Activated CD4-positive, alpha-beta T cell treated with anti-CD3 and anti-CD28 coated beads, Interleukin-2, amount 10 ng/mL, durations not matched to agents 24 days and 14 days (primary cell): ENCODE measurements at regions of chr2 and their contacts with region 1.

Region 1: GRCh38 chr2:9782197-9782719 is 61.0 kb upstream of the TAF1B start:
- DNase-seq: peak; percentile 94
- H3K4me3 Mint-ChIP-seq: peak overlapping the region; percentile 46
- H3K27ac Mint-ChIP-seq: peak overlapping the region; percentile 98
- H3K4me1 Mint-ChIP-seq: peaks cover 52% of the 10 kb centered on the region
- H3K27me3 Mint-ChIP-seq: no peaks in the 10 kb centered on the region

Region 2: DNA sequence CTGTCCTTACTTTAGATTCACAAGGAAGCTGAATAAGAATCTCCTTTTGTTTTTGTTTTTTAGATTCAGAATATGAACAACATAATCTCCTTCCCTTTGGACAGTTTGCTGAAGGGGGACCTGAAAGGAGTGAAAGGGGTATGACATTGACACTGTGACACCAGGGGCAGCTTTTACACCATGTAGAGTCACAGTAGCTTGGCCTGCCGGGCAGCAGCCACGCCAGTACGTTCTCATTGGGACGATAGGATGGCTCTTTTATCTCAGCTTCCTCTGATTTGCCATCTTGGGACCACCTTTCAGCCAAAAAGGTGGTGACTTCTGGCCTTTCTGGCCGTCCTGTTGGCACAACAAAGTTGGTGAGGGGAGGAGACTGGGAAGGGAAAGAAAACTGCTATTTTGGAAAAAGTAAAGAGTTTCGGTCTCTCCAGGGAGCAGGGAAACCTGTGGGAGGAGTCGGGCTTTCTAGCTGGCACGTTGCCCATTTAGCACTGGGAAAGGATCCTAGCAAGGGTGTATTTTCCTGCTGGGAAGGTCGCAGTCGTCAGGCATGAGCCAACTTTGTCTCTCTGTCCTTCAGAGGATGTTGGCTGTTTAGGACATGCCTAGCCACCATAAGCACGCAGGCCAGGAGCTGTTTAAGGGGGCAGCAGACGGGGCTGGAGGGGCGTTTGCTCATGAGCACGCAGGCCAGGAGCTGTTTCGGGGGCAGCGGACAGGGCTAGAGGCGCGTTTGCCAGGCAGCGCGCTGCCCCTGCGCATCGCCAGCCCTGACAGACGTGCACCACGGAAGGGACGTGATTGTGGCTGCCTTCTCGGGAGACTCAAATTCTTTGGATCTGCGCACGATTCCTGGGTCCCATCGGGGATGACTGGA is 463.6 kb before region 1 on chr2:
- intact Hi-C with region 1: no loop called
- DNase-seq: no peak
- H3K4me3 Mint-ChIP-seq: no peak overlapping the region
- H3K27ac Mint-ChIP-seq: no peak overlapping the region
- H3K4me1 Mint-ChIP-seq: no peaks in the 10 kb centered on the region
- H3K27me3 Mint-ChIP-seq: peaks cover 12% of the 10 kb centered on the region

Region 3: GRCh38 chr2:9594366-9595054 is 187.7 kb before region 1 on chr2:
- intact Hi-C with region 1: loop called (anchors 1 kb)
- DNase-seq: no peak
- H3K4me3 Mint-ChIP-seq: peak overlapping the region; percentile 22
- H3K27ac Mint-ChIP-seq: peak overlapping the region; percentile 81
- H3K4me1 Mint-ChIP-seq: peaks cover 52% of the 10 kb centered on the region
- H3K27me3 Mint-ChIP-seq: no peaks in the 10 kb centered on the region

Region 4: GRCh38 chr2:9763356-9764152 is 18.7 kb before region 1 on chr2:
- intact Hi-C with region 1: loop called (anchors 2 kb)
- DNase-seq: no peak
- H3K4me3 Mint-ChIP-seq: no peak overlapping the region
- H3K27ac Mint-ChIP-seq: no peak overlapping the region
- H3K4me1 Mint-ChIP-seq: peaks cover 35% of the 10 kb centered on the region
- H3K27me3 Mint-ChIP-seq: peaks cover 8% of the 10 kb centered on the region

Region 5: GRCh38 chr2:9799665-9800632 is 17.7 kb after region 1 on chr2:
- intact Hi-C with region 1: loop called (anchors 1 kb)
- DNase-seq: peak; percentile 97
- H3K4me3 Mint-ChIP-seq: peak overlapping the region; percentile 65
- H3K27ac Mint-ChIP-seq: peak overlapping the region; percentile 56
- H3K4me1 Mint-ChIP-seq: peaks cover 31% of the 10 kb centered on the region
- H3K27me3 Mint-ChIP-seq: peaks cover 6% of the 10 kb centered on the region